ENCODE measurements at regions of chr3 and their contacts with region 1.

Region 1: GRCh38 chr3:172506094-172506493 is 17.1 kb downstream of the TNFSF10 start:
- DNase-seq: no peak
- H3K4me3 Mint-ChIP-seq: no peak overlapping the region
- H3K27ac Mint-ChIP-seq: no peak overlapping the region
- H3K4me1 Mint-ChIP-seq: no peaks in the 10 kb centered on the region
- H3K27me3 Mint-ChIP-seq: no peaks in the 10 kb centered on the region
- CTCF ChIP-seq: no peak

Region 2: GRCh38 chr3:171646357-171647133 is 859.5 kb before region 1 on chr3:
- CTCF ChIA-PET with region 1: no interaction called
- intact Hi-C with region 1: no loop called
- DNase-seq: no peak
- H3K4me3 Mint-ChIP-seq: no peak overlapping the region
- H3K27ac Mint-ChIP-seq: no peak overlapping the region
- H3K4me1 Mint-ChIP-seq: peaks cover 9% of the 10 kb centered on the region
- H3K27me3 Mint-ChIP-seq: no peaks in the 10 kb centered on the region
- CTCF ChIP-seq: peak; percentile 63

Region 3: DNA sequence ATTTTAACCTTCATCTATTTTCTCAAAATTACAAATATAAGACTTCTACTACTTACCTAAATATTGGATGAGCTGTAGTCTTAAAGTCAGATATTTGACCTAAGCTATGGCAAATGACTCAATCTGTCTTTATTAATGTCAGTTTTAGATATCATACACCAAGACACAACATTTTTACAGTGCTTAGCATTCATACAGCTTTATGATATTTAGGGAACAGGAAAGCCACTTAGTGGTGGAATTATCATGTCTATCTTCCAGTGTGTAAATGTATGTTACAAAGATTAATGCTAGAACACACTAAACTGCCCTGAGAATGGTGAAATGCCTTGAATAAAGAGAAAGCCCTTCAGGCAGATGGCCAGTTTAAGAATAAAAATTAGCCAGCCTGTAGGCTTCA is 499.9 kb after region 1 on chr3:
- CTCF ChIA-PET with region 1: interaction called, 12 read pairs
- intact Hi-C with region 1: no loop called
- DNase-seq: no peak
- H3K4me3 Mint-ChIP-seq: no peak overlapping the region
- H3K27ac Mint-ChIP-seq: no peak overlapping the region
- H3K4me1 Mint-ChIP-seq: no peaks in the 10 kb centered on the region
- H3K27me3 Mint-ChIP-seq: no peaks in the 10 kb centered on the region
- CTCF ChIP-seq: no peak